Dendritic cell treated with granulocyte-macrophage colony-stimulating factor and Interleukin-4, amounts not matched to agents 40 ng/mL and 50 ng/mL, for 4 days (primary cell): ENCODE measurements at regions of chr19 and their contacts with region 1.

Region 1: GRCh38 chr19:57632987-57633831 is at the start of gene ZNF211:
- H3K4me3 Mint-ChIP-seq: peak within 1 kb of the TSS; percentile 99
- H3K27ac Mint-ChIP-seq: peak within 1 kb of the TSS; percentile 97
- H3K4me1 Mint-ChIP-seq: peaks cover 26% of the 10 kb centered on the region
- H3K27me3 Mint-ChIP-seq: no peaks in the 10 kb centered on the region

Region 2: GRCh38 chr19:56720281-56720680 is 912.9 kb before region 1 on chr19:
- intact Hi-C with region 1: no loop called
- H3K4me3 Mint-ChIP-seq: no peak overlapping the region
- H3K27ac Mint-ChIP-seq: no peak overlapping the region
- H3K4me1 Mint-ChIP-seq: no peaks in the 10 kb centered on the region
- H3K27me3 Mint-ChIP-seq: no peaks in the 10 kb centered on the region

Region 3: DNA sequence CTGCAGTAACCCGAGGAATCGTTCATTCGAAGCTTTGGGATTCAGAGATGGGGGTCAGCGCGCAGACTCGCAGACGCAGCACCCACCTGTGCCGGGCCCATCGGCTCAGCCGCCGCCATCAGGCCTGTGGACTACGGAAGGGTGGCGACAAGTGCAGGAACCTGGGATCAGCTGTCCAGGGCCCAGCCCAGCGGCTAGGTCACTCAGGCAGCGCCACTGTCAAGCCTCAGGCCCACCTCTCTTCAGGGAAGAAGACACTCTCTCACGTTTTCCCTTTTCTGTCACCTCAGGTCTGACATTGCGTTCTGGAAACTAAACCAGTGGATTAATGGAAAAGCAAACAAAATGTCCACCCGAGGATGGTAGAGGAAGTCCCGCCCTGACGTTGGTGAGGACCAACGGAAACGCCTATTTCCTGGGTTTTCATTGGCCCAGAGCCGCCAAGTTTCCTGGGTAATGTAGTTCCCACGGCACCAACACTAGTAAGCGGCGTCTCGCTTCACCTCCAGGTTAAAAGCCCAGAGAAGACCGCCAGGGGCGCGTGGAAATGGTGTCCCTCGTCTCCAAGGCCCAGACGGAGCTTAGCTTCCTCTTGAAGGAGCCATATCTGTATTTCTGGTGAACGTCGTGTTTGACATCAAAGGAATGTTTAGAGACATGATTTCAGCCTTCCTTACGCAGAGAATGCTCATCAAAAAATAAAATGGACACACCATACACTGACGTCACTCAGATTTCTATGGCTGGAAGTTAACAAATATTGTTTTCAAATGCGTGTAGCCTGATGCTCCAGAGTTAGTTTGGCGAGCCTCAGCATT is 155.8 kb before region 1 on chr19 and contains the start of gene ZNF772:
- intact Hi-C with region 1: loop called (anchors 5 kb)
- H3K4me3 Mint-ChIP-seq: peak within 1 kb of the TSS; percentile 87
- H3K27ac Mint-ChIP-seq: peak within 1 kb of the TSS; percentile 93
- H3K4me1 Mint-ChIP-seq: peaks cover 21% of the 10 kb centered on the region
- H3K27me3 Mint-ChIP-seq: peaks cover 7% of the 10 kb centered on the region

Region 4: GRCh38 chr19:57559404-57560025 is 73.7 kb before region 1 on chr19 and contains the start of gene ZNF550:
- intact Hi-C with region 1: loop called (anchors 2 kb)
- H3K4me3 Mint-ChIP-seq: peak within 1 kb of the TSS; percentile 92
- H3K27ac Mint-ChIP-seq: peak within 1 kb of the TSS; percentile 91
- H3K4me1 Mint-ChIP-seq: peaks cover 23% of the 10 kb centered on the region
- H3K27me3 Mint-ChIP-seq: peaks cover 13% of the 10 kb centered on the region

Region 5: DNA sequence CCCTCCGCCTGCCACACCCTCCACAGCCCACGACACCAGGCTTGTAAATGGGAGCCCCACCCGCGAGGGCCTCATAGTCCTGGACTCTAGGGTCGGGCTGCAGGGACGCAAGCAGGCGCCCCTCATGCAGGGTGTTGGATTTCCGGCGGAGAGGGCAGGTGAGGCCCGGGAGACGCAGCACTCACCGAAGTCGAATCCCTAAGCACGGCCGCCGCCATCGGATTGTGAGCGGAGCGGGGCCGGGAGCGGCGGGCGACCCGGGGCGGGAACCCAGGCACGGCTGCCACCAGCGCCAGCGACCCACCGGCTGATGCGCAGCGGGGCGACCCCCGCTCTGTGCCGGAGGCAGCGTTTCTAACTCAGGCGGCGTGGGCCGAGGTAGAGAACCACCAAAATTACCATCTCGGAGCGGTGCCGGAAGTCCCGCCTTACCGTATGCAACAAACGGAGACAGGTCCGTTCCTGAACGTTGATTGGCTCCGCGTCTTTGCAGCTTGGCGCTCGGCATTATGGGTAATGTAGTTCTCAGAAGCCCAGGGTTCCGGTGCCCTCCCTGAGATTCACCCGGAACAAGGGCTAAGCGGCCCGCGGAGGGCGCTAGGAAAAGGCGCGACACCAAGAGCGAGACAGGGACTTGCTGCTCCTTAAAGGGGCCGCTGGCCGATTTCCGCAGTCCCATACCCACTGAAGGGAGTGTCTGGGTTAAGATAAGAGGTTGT is 54.6 kb before region 1 on chr19 and contains the start of gene ZNF416:
- intact Hi-C with region 1: loop called (anchors 5 kb)
- H3K4me3 Mint-ChIP-seq: peak within 1 kb of the TSS; percentile 82
- H3K27ac Mint-ChIP-seq: peak within 1 kb of the TSS; percentile 74
- H3K4me1 Mint-ChIP-seq: peaks cover 22% of the 10 kb centered on the region
- H3K27me3 Mint-ChIP-seq: no peaks in the 10 kb centered on the region

Region 6: GRCh38 chr19:57613941-57614743 is 19.1 kb before region 1 on chr19 and contains the start of gene ZNF134:
- intact Hi-C with region 1: loop called (anchors 1 kb)
- H3K4me3 Mint-ChIP-seq: peak within 1 kb of the TSS; percentile 93
- H3K27ac Mint-ChIP-seq: peak within 1 kb of the TSS; percentile 78
- H3K4me1 Mint-ChIP-seq: peaks cover 36% of the 10 kb centered on the region
- H3K27me3 Mint-ChIP-seq: peaks cover 2% of the 10 kb centered on the region